Activated CD4-positive, alpha-beta T cell treated with anti-CD3 and anti-CD28 coated beads for 36 hours (primary cell): ENCODE measurements at regions of chr1 and their contacts with region 1.

Region 1: DNA sequence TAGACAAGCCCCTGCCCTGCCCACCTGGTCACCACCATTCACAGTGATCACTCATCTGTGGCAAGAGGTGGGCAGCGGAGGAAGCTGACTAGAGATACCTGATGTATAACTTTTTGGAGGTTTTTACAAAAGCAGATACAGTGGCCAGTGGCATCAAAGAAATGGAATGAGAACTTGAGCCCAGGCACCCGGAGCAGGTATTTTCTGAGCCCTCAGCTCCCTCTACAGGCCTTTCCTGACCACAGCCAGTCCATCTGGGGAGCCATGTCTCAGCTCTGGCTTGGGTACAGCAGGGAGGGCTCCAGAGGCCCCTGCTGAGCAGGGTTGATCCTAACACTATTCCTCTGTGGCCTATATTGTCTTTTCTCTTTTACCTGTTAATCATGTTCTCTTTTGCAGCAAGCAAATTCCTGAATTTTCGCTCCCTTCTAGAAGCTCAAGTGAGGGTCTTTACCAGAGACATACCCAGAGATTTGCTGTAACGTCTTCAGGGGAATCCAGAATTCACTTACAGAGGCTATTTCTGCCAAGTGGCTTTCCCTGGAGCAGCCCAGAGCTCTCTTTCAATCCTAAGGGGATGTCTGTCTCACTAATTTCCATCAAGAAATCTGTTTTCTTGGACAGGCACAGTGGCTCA is 27.3 kb downstream of the GPR157 start:
- DNase-seq: peak; percentile 53
- ATAC-seq: peak; percentile 68
- H3K4me3 Mint-ChIP-seq: no peak overlapping the region
- H3K27ac Mint-ChIP-seq: no peak overlapping the region
- H3K4me1 Mint-ChIP-seq: no peaks in the 10 kb centered on the region
- H3K27me3 Mint-ChIP-seq: no peaks in the 10 kb centered on the region

Region 2: GRCh38 chr1:8925406-8925805 is 176.2 kb before region 1 on chr1:
- CTCF ChIA-PET with region 1: no interaction called
- POLR2A ChIA-PET with region 1: no interaction called
- intact Hi-C with region 1: loop called in 1 of 2 experiments (anchors 5 kb)
- DNase-seq: no peak
- ATAC-seq: no peak
- H3K4me3 Mint-ChIP-seq: no peak overlapping the region
- H3K27ac Mint-ChIP-seq: no peak overlapping the region
- H3K4me1 Mint-ChIP-seq: peaks cover 6% of the 10 kb centered on the region
- H3K27me3 Mint-ChIP-seq: no peaks in the 10 kb centered on the region

Region 3: DNA sequence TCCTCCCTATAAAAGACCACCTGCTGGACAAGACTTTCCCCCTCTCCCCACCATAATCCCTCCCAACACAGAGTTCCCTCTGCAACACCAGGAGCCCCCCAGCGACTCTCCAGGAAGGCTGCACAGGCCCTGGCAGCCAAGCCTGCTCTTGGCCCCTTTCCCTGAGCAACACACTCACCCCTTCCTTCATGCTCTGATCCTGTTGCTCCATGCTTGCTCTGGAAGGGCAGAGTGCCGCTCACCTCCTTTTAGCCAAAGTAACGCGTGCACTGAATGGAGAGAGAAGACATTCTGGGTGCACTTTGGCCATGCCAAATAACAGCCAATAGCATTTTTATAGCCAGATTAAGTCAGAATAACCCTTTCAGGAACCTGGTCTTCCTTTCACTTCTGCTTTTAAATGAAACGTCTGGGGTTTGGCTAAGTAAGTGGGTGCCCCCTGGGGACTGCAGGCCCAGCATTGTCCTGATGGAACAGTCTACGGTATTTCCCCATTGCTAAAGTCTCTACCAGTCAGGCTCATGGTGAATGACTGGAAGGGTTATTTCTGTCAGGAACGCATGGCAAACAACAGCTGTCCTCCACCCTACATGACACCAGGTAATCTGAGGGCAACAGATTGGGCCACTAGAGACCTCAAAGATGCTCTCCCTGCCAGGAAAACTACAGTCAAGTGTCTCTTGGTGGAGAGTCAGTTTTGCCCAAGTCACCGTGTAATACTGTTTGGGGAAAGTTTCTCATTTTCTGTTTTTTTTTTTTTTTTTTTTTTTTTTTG is 32.1 kb before region 1 on chr1 and contains the start of gene SLC2A5:
- CTCF ChIA-PET with region 1: no interaction called
- POLR2A ChIA-PET with region 1: no interaction called
- intact Hi-C with region 1: no loop called
- DNase-seq: no peak
- ATAC-seq: peak; percentile 26
- H3K4me3 Mint-ChIP-seq: no peak within 1 kb of the TSS
- H3K27ac Mint-ChIP-seq: no peak within 1 kb of the TSS
- H3K4me1 Mint-ChIP-seq: no peaks in the 10 kb centered on the region
- H3K27me3 Mint-ChIP-seq: peaks cover under 1% of the 10 kb centered on the region
- total RNA-seq, gene SLC2A5: not detected

Region 4: GRCh38 chr1:9606948-9607347 is 505.3 kb after region 1 on chr1:
- CTCF ChIA-PET with region 1: no interaction called
- POLR2A ChIA-PET with region 1: no interaction called
- intact Hi-C with region 1: no loop called
- DNase-seq: no peak
- ATAC-seq: no peak
- H3K4me3 Mint-ChIP-seq: no peak overlapping the region
- H3K27ac Mint-ChIP-seq: no peak overlapping the region
- H3K4me1 Mint-ChIP-seq: no peaks in the 10 kb centered on the region
- H3K27me3 Mint-ChIP-seq: no peaks in the 10 kb centered on the region